Left cardiac atrium (tissue), 4 donors: ENCODE measurements at regions of chr4 and their contacts with region 1.

Region 1: GRCh38 chr4:150176547-150176946 is 98.3 kb downstream of the DCLK2 start:
- DNase-seq: no peak
- ATAC-seq: peak; percentile 67 to 72

Region 2: GRCh38 chr4:150078637-150079581 is 97.6 kb before region 1 on chr4:
- intact Hi-C with region 1: loop called in 1 of 2 experiments (anchors 10 kb)
- DNase-seq: peak; percentile 74
- ATAC-seq: peak; percentile 71 to 77

Region 3: GRCh38 chr4:150090836-150091235 is 85.7 kb before region 1 on chr4:
- intact Hi-C with region 1: no loop called
- DNase-seq: no peak
- ATAC-seq: no peak